B cell (primary cell): ENCODE measurements at regions of chr22 and their contacts with region 1.

Region 1: GRCh38 chr22:26461188-26461810 is 22.3 kb downstream of the HPS4 start:
- DNase-seq: peak; percentile 61
- ATAC-seq: no peak
- H3K4me3 ChIP-seq: no peak overlapping the region
- H3K4me3 Mint-ChIP-seq: no peak overlapping the region
- H3K27ac ChIP-seq: no peak overlapping the region
- H3K27ac Mint-ChIP-seq: no peak overlapping the region
- H3K4me1 ChIP-seq: no peaks in the 10 kb centered on the region
- H3K4me1 Mint-ChIP-seq: no peaks in the 10 kb centered on the region
- H3K27me3 ChIP-seq: no peaks in the 10 kb centered on the region
- H3K27me3 Mint-ChIP-seq: no peaks in the 10 kb centered on the region
- CTCF ChIP-seq: peak; percentile 81

Region 2: GRCh38 chr22:26364066-26365015 is 97.0 kb before region 1 on chr22:
- CTCF ChIA-PET with region 1: interaction called, 136 read pairs
- POLR2A ChIA-PET with region 1: no interaction called
- intact Hi-C with region 1: loop called (anchors 1 kb)
- DNase-seq: peak; percentile 77
- ATAC-seq: peak; percentile 78
- H3K4me3 ChIP-seq: no peak overlapping the region
- H3K4me3 Mint-ChIP-seq: no peak overlapping the region
- H3K27ac ChIP-seq: no peak overlapping the region
- H3K27ac Mint-ChIP-seq: no peak overlapping the region
- H3K4me1 ChIP-seq: peaks cover 4 to 7% of the 10 kb centered on the region in 2 donors
- H3K4me1 Mint-ChIP-seq: peaks cover 3% of the 10 kb centered on the region
- H3K27me3 ChIP-seq: peaks cover 0 to 18% (median 4%) of the 10 kb centered on the region in 4 experiments
- H3K27me3 Mint-ChIP-seq: peaks cover 24% of the 10 kb centered on the region
- CTCF ChIP-seq: peak; percentile 71

Region 3: GRCh38 chr22:26391623-26392022 is 69.7 kb before region 1 on chr22:
- CTCF ChIA-PET with region 1: interaction called, 179 read pairs
- POLR2A ChIA-PET with region 1: no interaction called
- intact Hi-C with region 1: no loop called
- DNase-seq: no peak
- ATAC-seq: no peak
- H3K4me3 ChIP-seq: no peak overlapping the region
- H3K4me3 Mint-ChIP-seq: no peak overlapping the region
- H3K27ac ChIP-seq: no peak overlapping the region
- H3K27ac Mint-ChIP-seq: no peak overlapping the region
- H3K4me1 ChIP-seq: no peaks in the 10 kb centered on the region
- H3K4me1 Mint-ChIP-seq: no peaks in the 10 kb centered on the region
- H3K27me3 ChIP-seq: peaks cover 0 to 14% (median 6%) of the 10 kb centered on the region in 4 experiments
- H3K27me3 Mint-ChIP-seq: peaks cover 15% of the 10 kb centered on the region
- CTCF ChIP-seq: no peak

Region 4: GRCh38 chr22:26404851-26405421 is 56.4 kb before region 1 on chr22:
- CTCF ChIA-PET with region 1: interaction called, 179 read pairs
- POLR2A ChIA-PET with region 1: no interaction called
- intact Hi-C with region 1: no loop called
- DNase-seq: peak; percentile 47
- ATAC-seq: no peak
- H3K4me3 ChIP-seq: no peak overlapping the region
- H3K4me3 Mint-ChIP-seq: peak overlapping the region; percentile 55
- H3K27ac ChIP-seq: no peak overlapping the region
- H3K27ac Mint-ChIP-seq: peak overlapping the region; percentile 5
- H3K4me1 ChIP-seq: peaks cover 13 to 15% of the 10 kb centered on the region in 2 donors
- H3K4me1 Mint-ChIP-seq: peaks cover 11% of the 10 kb centered on the region
- H3K27me3 ChIP-seq: no peaks in the 10 kb centered on the region
- H3K27me3 Mint-ChIP-seq: peaks cover 12% of the 10 kb centered on the region
- CTCF ChIP-seq: no peak

Region 5: DNA sequence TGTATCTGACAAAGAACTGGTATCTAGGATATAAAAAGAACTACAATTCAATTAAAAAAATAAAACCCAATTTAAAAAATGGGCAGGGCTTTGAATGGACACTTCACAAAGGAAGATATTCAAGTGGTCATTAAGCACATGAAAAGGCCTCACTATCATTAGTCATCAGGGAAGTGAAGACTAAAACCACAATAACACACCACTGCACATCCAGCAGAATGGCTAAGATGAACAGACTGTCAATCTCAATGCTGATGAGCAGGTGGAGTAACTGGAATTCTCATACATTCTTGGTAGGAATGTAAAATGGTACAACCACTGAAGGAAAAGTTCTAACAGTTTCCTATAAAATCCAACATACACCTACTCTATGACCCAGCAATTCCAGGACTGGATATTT is 13.4 kb after region 1 on chr22:
- CTCF ChIA-PET with region 1: interaction called, 10 read pairs
- POLR2A ChIA-PET with region 1: no interaction called
- intact Hi-C with region 1: no loop called
- DNase-seq: no peak
- ATAC-seq: no peak
- H3K4me3 ChIP-seq: no peak overlapping the region
- H3K4me3 Mint-ChIP-seq: no peak overlapping the region
- H3K27ac ChIP-seq: no peak overlapping the region
- H3K27ac Mint-ChIP-seq: no peak overlapping the region
- H3K4me1 ChIP-seq: peaks cover 11 to 13% of the 10 kb centered on the region in 2 donors
- H3K4me1 Mint-ChIP-seq: peaks cover 22% of the 10 kb centered on the region
- H3K27me3 ChIP-seq: no peaks in the 10 kb centered on the region
- H3K27me3 Mint-ChIP-seq: no peaks in the 10 kb centered on the region
- CTCF ChIP-seq: no peak